ENCODE measurements at regions of chr2 and their contacts with region 1.

Region 1: GRCh38 chr2:148802448-148803220 is 72.4 kb upstream of the KIF5C start:
- DNase-seq: no peak
- ATAC-seq: no peak
- H3K4me3 Mint-ChIP-seq: no peak overlapping the region
- H3K27ac Mint-ChIP-seq: no peak overlapping the region
- H3K4me1 Mint-ChIP-seq: no peaks in the 10 kb centered on the region
- H3K27me3 Mint-ChIP-seq: peaks cover 16% of the 10 kb centered on the region
- CTCF ChIP-seq: no peak

Region 2: DNA sequence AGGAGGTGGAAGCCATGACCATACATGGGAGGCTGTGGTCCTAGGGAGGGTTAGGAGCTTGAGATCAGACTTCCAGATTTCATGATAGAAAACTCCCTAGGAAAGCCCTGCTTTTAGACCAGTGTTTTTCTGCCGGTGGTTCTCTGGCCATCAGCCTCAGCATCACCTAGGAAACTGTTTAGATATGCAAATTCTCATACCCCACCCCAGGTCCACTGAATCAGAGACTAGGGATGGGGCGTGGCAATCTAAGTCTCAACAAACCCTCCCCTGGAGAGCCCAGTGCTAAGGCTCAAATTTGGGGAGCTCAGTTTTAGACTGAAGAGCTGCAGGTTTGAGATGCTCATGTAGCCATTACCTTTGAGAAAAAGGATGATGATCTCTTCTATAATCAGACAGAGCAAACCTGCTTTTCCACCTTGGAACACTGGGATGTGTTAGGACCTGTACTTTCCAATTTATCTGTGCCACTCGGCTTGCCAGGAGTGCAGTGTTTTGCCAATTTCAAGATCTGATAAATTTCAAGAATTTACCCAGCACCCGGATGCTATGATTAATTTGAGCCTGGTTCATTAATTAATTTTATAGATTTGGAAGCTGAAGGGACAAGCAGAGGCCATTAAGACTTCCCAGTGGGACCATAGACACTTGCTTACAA is 204.4 kb after region 1 on chr2:
- CTCF ChIA-PET with region 1: no interaction called
- POLR2A ChIA-PET with region 1: interaction called, 11 read pairs
- intact Hi-C with region 1: no loop called
- DNase-seq: no peak
- ATAC-seq: no peak
- H3K4me3 Mint-ChIP-seq: no peak overlapping the region
- H3K27ac Mint-ChIP-seq: no peak overlapping the region
- H3K4me1 Mint-ChIP-seq: no peaks in the 10 kb centered on the region
- H3K27me3 Mint-ChIP-seq: no peaks in the 10 kb centered on the region
- CTCF ChIP-seq: no peak

Measured in activated B cell treated with CpG ODN at 0.5 μM for 24 hours (primary cell).